A673 (cell line): ENCODE measurements at regions of chr6 and their contacts with region 1.

Region 1: DNA sequence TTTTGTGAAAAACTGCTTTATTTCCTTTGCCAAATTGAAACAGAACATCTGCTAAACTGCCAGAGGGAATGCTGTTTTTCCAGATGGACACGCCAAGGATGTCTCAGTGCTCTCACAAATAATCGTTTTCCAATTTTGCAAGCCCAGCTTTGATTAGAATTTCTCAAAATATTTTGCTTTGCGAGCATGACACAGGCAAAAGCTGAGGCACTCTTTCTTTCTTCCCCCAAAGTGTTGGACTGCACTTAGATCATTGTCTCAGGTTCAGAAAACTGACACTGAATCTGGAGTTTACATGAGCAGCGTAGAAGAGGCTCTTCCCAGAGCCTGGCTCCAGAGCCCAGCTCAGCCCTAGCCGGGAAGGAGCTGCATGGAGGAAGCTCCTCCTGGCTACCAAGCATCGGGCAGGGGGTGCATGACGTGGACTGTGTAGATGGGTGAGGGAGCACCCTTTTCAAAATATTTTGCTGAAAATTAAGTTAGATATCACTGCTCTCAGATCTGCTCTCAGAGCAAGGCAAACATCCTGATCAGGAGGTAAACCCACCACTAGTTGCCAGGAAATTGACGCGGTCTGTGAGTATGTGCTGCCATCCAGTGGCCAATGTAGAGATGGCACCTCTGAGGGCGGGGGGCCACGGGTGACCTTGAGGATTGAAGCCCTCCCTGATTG is 107.5 kb downstream of the SLC22A3 start:
- DNase-seq: peak; percentile 68
- H3K4me3 ChIP-seq: no peak overlapping the region
- H3K27ac ChIP-seq: no peak overlapping the region
- H3K4me1 ChIP-seq: no peaks in the 10 kb centered on the region
- H3K27me3 ChIP-seq: peaks cover 39% of the 10 kb centered on the region
- CTCF ChIP-seq: peak; percentile 96

Region 2: GRCh38 chr6:159693128-159693893 is 762.4 kb before region 1 on chr6 and contains the start of gene SOD2:
- CTCF ChIA-PET with region 1: no interaction called
- POLR2A ChIA-PET with region 1: no interaction called
- intact Hi-C with region 1: loop called (anchors 10 kb)
- DNase-seq: peak; percentile 87
- H3K4me3 ChIP-seq: peak within 1 kb of the TSS; percentile 97
- H3K27ac ChIP-seq: peak within 1 kb of the TSS; percentile 93
- H3K4me1 ChIP-seq: peaks cover 9% of the 10 kb centered on the region
- H3K27me3 ChIP-seq: no peaks in the 10 kb centered on the region
- CTCF ChIP-seq: no peak
- total RNA-seq, gene SOD2: 139 and 159 TPM in 2 replicates

Region 3: DNA sequence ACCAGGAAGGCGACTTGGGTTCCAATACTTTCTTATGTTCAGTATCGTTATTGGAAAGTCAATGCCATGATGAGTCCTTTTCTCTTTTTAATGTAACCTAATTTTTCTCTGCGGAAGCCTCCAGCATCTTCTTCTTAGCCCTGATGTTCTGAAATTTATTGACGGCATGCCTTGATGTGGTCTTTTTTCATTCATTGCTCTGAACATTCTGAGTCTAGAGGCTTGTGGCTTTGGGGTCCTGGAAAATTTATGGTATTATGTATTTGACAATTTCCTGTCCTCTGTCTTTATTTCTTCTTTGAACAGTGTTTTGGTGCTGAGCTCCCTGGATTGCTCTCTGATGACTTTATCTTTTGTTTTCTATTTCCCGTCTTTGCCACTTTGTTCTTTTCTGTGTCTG is 593.6 kb before region 1 on chr6:
- CTCF ChIA-PET with region 1: interaction called, 13 read pairs
- POLR2A ChIA-PET with region 1: no interaction called
- intact Hi-C with region 1: loop called (anchors 1 kb)
- DNase-seq: no peak
- H3K4me3 ChIP-seq: no peak overlapping the region
- H3K27ac ChIP-seq: no peak overlapping the region
- H3K4me1 ChIP-seq: no peaks in the 10 kb centered on the region
- H3K27me3 ChIP-seq: peaks cover 14% of the 10 kb centered on the region
- CTCF ChIP-seq: no peak

Region 4: DNA sequence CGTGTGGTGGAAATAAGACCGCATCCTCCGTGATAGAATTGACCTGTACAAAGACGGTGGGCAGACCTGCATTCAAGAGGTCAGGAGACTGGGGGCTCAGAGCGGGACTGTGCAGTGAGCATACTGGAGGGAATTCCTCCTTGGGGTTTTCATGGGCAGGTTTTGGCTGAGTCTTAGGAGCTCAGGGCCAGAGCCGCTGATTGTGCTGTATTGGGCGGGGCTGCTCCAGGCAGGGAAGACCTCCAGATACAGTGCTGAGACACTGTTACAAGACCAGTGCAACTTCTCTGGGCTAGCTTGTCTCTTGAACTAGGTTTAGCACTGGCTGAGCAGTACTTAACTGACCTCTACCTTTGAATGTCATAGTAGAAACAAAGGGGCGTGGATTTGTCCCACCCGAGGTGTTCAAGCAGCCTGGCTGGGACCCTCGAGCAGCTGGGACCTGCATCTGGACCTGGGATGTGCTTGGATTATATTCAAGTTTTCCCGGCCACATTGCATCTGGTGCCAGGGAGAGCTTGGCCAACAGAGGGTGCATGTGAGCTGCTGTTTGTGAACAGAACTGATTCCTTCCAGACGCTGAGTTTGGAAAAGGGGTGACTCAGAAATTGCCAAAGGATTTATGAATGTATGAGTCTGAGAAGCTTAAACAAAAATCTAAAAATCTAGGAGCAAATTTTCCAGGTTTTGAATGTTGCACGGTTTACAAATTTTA is 367.5 kb before region 1 on chr6:
- CTCF ChIA-PET with region 1: interaction called, 11 read pairs
- POLR2A ChIA-PET with region 1: no interaction called
- intact Hi-C with region 1: loop called (anchors 1 kb)
- DNase-seq: peak; percentile 52
- H3K4me3 ChIP-seq: no peak overlapping the region
- H3K27ac ChIP-seq: no peak overlapping the region
- H3K4me1 ChIP-seq: no peaks in the 10 kb centered on the region
- H3K27me3 ChIP-seq: no peaks in the 10 kb centered on the region
- CTCF ChIP-seq: peak; percentile 68

Region 5: DNA sequence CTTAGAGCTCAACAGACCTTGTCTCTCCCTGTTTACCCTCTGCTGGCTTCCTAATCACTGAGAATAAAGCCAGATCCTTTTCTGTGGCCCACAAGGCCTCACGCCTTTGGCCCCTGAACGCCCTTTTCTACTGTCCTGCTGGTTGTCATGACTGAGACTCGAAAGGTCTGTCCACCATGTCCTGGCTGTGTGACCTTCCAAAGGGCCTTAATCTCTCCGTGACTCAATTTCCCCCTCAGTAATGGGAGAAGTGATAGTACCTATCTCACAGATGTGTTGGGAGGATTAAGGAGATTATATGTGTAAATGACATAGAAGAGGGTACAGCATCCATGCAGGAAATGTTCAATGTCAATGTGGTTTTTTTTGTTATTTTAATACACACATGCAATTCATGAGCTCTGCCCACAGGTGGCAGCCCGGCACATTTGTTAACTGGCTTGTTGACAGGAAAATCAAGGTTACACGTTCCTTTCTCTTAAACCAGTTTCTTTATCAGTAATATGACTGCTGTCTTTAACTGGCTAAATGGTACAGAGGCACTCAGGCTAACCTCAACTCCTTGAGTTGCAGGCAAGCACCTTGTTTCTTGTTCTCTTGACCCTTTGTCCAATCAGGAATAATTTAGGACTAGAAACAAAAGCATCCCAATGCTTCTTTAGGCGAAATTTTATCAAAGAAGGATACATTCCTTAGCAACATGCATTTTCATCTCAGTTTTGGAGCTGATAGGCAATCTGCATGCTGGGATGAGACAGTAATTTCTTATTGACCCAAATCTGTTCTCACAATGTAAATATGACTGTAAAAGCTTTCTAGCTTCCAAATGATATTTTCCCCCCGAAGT is 317.5 kb before region 1 on chr6:
- CTCF ChIA-PET with region 1: interaction called, 11 read pairs
- POLR2A ChIA-PET with region 1: no interaction called
- intact Hi-C with region 1: loop called (anchors 1 kb)
- DNase-seq: peak; percentile 61
- H3K4me3 ChIP-seq: no peak overlapping the region
- H3K27ac ChIP-seq: no peak overlapping the region
- H3K4me1 ChIP-seq: no peaks in the 10 kb centered on the region
- H3K27me3 ChIP-seq: no peaks in the 10 kb centered on the region
- CTCF ChIP-seq: peak; percentile 79

Region 6: GRCh38 chr6:160477901-160478300 is 22.2 kb after region 1 on chr6:
- CTCF ChIA-PET with region 1: no interaction called
- POLR2A ChIA-PET with region 1: no interaction called
- intact Hi-C with region 1: no loop called
- DNase-seq: no peak
- H3K4me3 ChIP-seq: no peak overlapping the region
- H3K27ac ChIP-seq: no peak overlapping the region
- H3K4me1 ChIP-seq: no peaks in the 10 kb centered on the region
- H3K27me3 ChIP-seq: peaks cover 6% of the 10 kb centered on the region
- CTCF ChIP-seq: no peak

Region 7: DNA sequence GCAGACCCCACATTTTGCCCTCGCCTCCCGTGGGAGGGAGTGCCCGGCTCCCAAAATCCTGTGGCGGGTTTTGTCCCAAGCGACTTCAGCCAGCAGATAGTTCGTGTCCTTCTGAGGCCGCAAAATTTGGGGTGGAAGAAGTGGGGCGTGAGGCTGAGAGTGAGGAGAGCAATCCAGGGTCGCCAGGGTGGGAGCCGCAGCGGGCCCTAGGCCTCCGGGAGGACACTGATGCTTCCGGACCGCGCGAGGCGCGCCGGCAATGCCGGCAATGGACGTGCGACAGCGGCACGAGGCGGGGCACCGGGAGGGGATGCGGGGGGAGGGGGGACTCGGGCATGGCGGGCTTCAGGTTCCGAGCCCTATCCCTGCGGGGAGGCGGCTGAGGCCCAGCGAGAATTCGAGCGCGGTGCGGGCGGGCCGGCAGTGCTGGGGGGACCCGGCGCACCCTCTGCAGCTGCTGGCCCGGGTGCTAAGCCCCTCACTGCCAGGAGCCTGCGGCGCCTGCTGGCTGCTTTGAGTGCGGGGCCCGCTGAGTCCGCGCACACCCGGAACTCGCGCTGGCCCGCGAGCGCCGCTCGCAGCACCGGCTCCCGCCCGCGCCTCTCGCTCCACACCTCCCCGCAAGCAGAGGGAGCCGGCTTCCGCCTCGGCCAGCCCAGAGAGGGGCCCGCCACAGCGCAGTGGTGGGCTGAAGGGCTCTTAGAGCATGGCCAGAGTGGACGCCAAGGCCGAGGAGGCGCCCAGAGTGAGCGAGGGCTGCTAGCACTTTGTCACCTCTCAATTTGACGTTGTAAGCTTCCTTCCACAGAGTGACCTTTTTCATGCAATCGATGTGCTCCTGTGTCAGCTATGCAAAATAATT is 64.6 kb after region 1 on chr6:
- CTCF ChIA-PET with region 1: no interaction called
- POLR2A ChIA-PET with region 1: no interaction called
- intact Hi-C with region 1: no loop called
- DNase-seq: peak; percentile 71
- H3K4me3 ChIP-seq: peak overlapping the region; percentile 49
- H3K27ac ChIP-seq: no peak overlapping the region
- H3K4me1 ChIP-seq: no peaks in the 10 kb centered on the region
- H3K27me3 ChIP-seq: peaks cover 13% of the 10 kb centered on the region
- CTCF ChIP-seq: no peak; the same call in 1 of the 2 replicates

Region 8: DNA sequence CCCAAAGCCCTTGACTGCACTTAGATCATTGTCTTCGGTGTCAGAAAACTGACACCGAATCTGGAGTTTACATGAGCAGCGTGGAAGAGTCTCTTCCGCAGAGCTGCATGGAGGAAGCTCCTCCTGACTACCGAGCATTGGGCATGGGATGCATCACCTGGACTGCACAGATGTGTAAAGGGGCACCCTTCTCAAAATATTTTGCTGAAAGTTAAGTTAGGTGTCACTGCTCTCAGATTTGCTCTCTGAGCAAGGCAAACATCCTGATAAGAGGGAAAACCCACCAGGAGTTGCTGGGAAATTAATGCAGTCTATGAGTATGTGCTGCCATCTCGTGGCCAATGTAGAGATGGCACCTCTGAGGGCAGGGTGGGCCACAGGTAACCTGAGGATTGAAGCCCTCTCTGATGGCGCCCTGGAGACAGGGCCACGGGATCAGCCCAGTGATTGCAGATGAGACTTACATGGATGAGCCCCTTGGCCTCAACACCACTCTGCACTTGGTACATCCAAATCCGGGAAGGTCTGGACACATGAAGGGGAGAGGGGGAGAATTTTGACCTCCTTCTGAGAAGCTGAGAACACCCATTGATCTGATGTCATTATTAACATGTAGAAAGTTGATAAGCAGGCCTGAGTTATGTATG is 78.5 kb after region 1 on chr6:
- CTCF ChIA-PET with region 1: no interaction called
- POLR2A ChIA-PET with region 1: no interaction called
- intact Hi-C with region 1: loop called (anchors 1 kb)
- DNase-seq: peak; percentile 54
- H3K4me3 ChIP-seq: no peak overlapping the region
- H3K27ac ChIP-seq: no peak overlapping the region
- H3K4me1 ChIP-seq: no peaks in the 10 kb centered on the region
- H3K27me3 ChIP-seq: no peaks in the 10 kb centered on the region
- CTCF ChIP-seq: peak; percentile 91